Activated CD4-positive, alpha-beta T cell treated with anti-CD3 and anti-CD28 coated beads for 36 hours (primary cell): ENCODE measurements at regions of chr19 and their contacts with region 1.

Region 1: DNA sequence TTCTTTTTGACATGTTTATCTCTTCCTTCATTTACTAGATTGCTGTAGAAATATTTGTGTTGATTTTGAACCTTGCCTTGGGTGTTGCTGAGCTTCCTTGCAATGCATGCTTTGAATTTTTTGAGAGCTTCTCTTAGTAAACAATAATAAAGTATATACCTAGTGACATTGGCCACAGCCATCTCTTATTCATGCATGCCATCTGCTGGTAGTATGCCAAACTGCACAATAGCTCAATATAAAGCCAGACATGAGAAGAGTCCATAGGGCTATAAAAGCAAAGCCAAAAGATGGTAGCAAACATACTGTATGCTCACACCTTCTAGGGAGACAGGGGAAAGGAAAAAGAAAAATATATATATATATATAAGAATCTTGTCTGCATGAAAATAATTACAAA is 18.9 kb upstream of the ZSCAN5A start:
- DNase-seq: peak; percentile 55
- ATAC-seq: no peak
- H3K4me3 Mint-ChIP-seq: no peak overlapping the region
- H3K27ac Mint-ChIP-seq: no peak overlapping the region
- H3K4me1 Mint-ChIP-seq: no peaks in the 10 kb centered on the region
- H3K27me3 Mint-ChIP-seq: no peaks in the 10 kb centered on the region

Region 2: GRCh38 chr19:56066152-56067023 is 267.1 kb before region 1 on chr19:
- CTCF ChIA-PET with region 1: interaction called, 21 read pairs
- POLR2A ChIA-PET with region 1: no interaction called
- intact Hi-C with region 1: no loop called
- DNase-seq: peak; percentile 75
- ATAC-seq: peak; percentile 69
- H3K4me3 Mint-ChIP-seq: peak overlapping the region; percentile 50
- H3K27ac Mint-ChIP-seq: no peak overlapping the region
- H3K4me1 Mint-ChIP-seq: peaks cover 11% of the 10 kb centered on the region
- H3K27me3 Mint-ChIP-seq: peaks cover 16% of the 10 kb centered on the region

Region 3: DNA sequence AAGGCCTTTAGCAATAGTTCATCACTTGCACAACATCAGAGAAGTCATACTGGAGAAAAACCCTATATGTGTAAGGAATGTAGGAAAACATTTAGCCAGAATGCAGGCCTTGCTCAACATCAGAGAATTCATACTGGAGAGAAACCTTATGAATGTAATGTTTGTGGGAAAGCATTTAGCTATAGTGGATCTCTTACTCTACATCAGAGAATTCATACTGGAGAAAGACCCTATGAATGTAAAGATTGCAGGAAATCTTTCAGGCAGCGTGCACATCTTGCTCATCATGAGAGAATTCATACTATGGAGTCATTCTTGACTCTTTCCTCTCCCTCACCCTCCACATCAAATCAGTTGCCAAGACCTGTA is 90.5 kb after region 1 on chr19:
- CTCF ChIA-PET with region 1: no interaction called
- POLR2A ChIA-PET with region 1: no interaction called
- intact Hi-C with region 1: no loop called
- DNase-seq: no peak
- ATAC-seq: no peak
- H3K4me3 Mint-ChIP-seq: no peak overlapping the region
- H3K27ac Mint-ChIP-seq: no peak overlapping the region
- H3K4me1 Mint-ChIP-seq: no peaks in the 10 kb centered on the region
- H3K27me3 Mint-ChIP-seq: no peaks in the 10 kb centered on the region